ENCODE measurements at regions of chr15 and their contacts with region 1.

Region 1: DNA sequence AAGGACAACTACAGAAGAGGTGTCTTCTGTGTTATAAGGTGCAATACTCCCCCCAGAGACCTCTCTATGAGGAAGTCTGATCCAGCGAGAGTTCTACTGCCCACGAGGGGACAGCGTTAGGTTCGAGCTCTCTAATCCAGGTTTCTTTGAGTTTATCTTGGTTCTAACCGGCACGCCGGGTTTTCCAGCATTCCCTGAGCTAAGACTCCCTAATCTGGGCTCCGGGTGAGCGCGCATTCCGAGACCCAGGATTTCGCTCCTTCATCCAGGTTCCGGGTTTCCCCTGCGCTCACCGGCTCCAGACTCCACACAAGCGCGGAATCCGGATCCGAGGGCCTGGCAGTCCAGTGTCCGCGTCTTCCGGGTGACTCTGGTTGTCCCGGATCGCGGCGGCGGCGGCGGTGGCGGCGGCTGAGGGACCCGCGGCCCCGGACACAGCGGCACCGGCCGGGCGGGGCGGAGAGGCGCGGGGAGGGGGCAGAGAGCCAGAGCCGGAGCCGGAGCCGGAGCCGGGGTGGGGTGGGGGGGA is at the start of gene ZNF609:
- DNase-seq: peak; percentile 83 to 94 (median 92)
- H3K4me3 ChIP-seq: peak within 1 kb of the TSS; percentile 48 to 82 (median 65)
- H3K27ac ChIP-seq: peak within 1 kb of the TSS; percentile 62 to 95 (median 86)
- H3K27me3 ChIP-seq: no peaks in the 10 kb centered on the region
- CTCF ChIP-seq: peak in 20 of 56 donors; percentile 6 to 43 (median 22)
- total RNA-seq, gene ZNF609: 38.6 to 68.4 (median 55.0) TPM

Region 2: DNA sequence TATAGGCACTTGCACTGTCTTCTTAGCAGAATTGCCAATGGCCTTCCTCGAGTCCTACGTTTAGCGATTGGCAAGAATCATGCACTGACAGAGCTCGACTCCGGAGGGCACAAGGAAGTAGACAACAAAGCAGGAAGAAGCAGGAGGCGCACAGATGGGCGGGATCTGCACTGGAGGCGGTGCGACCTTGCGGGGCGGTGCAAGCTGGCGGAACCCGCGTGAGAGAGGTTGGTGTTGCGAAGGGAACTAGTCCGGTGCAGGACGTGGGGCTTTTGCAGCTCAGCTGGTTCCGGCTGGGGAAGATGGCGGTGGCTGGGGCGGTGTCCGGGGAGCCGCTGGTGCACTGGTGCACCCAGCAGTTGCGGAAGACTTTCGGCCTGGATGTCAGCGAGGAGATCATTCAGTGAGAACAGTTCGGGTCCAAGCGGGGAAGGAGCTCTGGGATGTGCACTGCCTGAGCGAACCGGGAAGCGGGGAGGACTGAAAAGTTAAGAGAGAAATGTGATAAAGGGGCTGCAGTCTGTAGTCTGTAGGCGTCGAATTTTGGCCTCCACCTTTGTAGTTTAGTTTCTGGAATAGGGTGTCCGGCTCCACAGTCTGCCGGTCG is 72.6 kb before region 1 on chr15 and contains the start of gene TRIP4:
- intact Hi-C with region 1: loop called in 1 of 2 experiments (anchors 5 kb)
- DNase-seq: peak; percentile 80 to 96 (median 93)
- H3K4me3 ChIP-seq: peak within 1 kb of the TSS; percentile 53 to 98 (median 79)
- H3K27ac ChIP-seq: peak within 1 kb of the TSS in 55 of 59 donors; percentile 47 to 90 (median 79)
- H3K27me3 ChIP-seq: no peaks in the 10 kb centered on the region
- CTCF ChIP-seq: peak in 36 of 56 donors; percentile 9 to 51 (median 36)
- total RNA-seq, gene TRIP4: 13.0 to 37.0 (median 22.6) TPM

Region 3: DNA sequence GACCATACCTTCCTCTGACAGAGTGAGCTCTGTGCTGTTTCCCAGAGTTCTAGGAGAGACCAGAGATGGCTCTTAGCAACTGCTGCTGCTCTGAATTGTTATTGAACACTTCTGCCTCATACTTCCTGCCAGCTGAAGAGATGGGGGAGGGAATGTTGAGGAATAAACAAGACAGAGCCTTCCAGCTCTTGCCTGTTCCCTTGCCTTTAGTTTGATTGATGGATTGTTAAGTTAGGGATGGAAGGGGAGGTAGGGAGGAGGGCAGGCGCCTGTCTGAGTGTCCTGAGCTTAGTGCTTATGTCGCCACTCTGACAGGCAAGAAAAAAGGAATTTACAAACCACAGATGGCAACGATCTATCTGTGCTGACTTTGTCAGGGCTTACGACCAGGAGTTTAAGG is 42.9 kb after region 1 on chr15:
- intact Hi-C with region 1: loop called in 1 of 2 experiments (anchors 5 kb)
- DNase-seq: no peak
- H3K4me3 ChIP-seq: peak overlapping the region in 27 of 59 donors; percentile 2 to 46 (median 19)
- H3K27ac ChIP-seq: peak overlapping the region; percentile 1 to 91 (median 82)
- H3K27me3 ChIP-seq: no peaks in the 10 kb centered on the region
- CTCF ChIP-seq: no peak

Region 4: GRCh38 chr15:64521726-64522164 is 61.5 kb after region 1 on chr15:
- intact Hi-C with region 1: loop called in 1 of 2 experiments (anchors 5 kb)
- DNase-seq: peak; percentile 11 to 90 (median 68)
- H3K4me3 ChIP-seq: peak overlapping the region in 16 of 59 donors; percentile 1 to 35 (median 16)
- H3K27ac ChIP-seq: peak overlapping the region; percentile 62 to 99 (median 91)
- H3K27me3 ChIP-seq: no peaks in the 10 kb centered on the region
- CTCF ChIP-seq: peak in 2 of 56 donors; percentile 6 to 12

Region 5: GRCh38 chr15:64634576-64635498 is 174.6 kb after region 1 on chr15:
- intact Hi-C with region 1: loop called (anchors 10 kb)
- DNase-seq: no peak
- H3K4me3 ChIP-seq: peak overlapping the region in 1 of 59 donors; percentile 1
- H3K27ac ChIP-seq: peak overlapping the region in 34 of 59 donors; percentile 7 to 73 (median 44)
- H3K27me3 ChIP-seq: no peaks in the 10 kb centered on the region
- CTCF ChIP-seq: no peak

Region 6: DNA sequence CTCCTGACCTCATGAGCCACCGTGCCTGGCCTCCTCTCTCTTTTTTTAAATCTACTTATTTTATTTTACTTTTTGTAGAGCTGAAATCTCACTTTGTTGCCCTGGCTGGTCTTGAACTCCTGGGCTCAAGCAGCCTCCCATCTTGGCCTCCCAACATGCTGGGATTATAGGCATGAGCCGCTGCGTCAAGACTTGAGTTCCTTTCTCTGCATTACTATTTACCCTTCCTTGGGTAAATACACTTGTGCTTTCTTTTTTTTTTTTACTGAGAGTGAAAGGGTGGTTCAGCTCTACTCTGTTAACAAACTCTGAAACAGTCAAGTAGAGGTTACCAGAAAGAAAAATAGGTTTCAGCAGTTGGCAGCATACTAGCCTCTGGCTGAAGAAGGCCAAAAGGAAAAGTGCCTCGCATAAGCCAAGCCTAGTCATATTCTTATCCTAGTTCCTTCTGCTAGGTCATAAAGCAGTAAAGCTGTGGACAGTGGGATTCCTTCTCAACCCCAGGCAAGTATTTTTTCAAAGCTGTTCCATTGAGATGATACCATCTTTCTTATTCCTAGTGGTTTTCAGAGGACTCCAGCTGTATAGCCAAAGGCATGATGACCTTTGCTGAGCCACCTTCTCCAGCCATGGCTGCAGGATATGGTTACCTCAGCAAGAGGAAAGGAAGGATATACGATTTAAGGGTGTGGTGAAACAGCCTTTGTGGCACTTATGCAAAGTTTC is 180.0 kb after region 1 on chr15:
- intact Hi-C with region 1: loop called (anchors 10 kb)
- DNase-seq: no peak
- H3K4me3 ChIP-seq: no peak overlapping the region
- H3K27ac ChIP-seq: peak overlapping the region in 16 of 59 donors; percentile 2 to 71 (median 28)
- H3K27me3 ChIP-seq: no peaks in the 10 kb centered on the region
- CTCF ChIP-seq: no peak